GM13976 (cell line): ENCODE measurements at regions of chr20 and their contacts with region 1.

Region 1: DNA sequence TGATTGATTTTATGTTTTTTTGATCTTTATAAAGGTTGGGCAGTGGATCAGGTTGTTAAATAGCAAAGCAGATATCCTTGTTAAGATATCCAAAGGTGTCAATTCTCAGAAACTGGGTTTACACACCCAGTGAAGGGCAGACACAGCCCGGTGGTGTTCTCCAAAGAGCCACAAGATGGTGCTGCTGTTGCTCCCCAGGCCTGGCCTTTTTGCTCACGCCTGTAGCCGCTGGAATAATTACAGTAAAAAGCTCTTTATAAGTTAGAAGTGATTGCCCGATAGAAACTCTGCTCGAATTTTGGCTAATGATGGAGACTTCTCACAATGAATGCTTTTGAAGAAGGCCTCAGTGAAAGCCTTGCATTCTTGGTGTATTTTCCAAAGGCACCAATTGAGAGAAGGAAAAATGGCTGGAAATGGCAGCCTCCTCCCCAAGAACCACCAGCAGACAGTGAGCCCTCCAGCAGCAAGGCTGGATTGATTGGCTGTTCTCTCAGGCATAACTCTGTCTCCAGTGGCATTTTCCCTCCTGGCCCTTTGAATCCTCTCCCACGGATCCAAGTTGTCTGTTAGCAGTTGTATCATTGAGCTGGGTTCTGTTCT is 120.5 kb upstream of the CHD6 start:
- DNase-seq: peak; percentile 43
- CTCF ChIP-seq: peak; percentile 77

Region 2: DNA sequence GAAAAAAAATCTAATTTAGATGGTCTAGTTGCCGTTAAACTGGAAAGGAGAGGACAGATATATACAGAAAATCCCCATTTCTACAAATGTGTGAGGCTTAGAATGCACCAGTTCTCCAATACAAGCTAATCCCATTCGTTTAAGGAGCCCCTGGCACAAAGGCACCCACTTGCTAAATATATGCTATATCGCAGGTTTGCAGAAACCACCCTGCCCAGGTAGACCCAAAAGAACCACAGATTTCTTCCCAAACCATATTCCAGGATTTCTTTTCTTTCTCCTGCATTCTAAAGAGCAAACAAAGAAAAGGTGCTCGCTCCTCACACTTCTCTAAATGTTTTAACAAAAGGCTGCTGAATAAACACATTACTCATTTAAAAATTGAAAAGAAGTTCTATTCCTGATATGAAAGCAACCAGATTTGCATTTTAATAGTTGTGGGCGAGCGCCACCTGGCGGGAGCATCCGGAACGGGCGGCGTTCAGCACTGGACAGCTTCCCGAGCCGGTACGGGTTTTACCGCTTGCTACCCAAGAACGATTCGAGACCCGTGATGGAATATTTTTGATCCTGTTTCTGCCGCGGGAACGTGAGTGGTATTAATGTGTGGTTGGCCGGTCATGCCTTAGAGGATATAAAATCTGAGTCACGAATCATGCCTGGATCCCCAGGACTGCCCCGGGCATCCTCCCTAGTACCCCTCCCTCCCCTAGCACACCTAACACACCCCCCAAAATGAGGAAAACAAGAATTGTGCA is 1449.0 kb after region 1 on chr20:
- in situ Hi-C with region 1: loop called (anchors 25 kb)
- DNase-seq: peak; percentile 85
- CTCF ChIP-seq: peak; percentile 84

Region 3: DNA sequence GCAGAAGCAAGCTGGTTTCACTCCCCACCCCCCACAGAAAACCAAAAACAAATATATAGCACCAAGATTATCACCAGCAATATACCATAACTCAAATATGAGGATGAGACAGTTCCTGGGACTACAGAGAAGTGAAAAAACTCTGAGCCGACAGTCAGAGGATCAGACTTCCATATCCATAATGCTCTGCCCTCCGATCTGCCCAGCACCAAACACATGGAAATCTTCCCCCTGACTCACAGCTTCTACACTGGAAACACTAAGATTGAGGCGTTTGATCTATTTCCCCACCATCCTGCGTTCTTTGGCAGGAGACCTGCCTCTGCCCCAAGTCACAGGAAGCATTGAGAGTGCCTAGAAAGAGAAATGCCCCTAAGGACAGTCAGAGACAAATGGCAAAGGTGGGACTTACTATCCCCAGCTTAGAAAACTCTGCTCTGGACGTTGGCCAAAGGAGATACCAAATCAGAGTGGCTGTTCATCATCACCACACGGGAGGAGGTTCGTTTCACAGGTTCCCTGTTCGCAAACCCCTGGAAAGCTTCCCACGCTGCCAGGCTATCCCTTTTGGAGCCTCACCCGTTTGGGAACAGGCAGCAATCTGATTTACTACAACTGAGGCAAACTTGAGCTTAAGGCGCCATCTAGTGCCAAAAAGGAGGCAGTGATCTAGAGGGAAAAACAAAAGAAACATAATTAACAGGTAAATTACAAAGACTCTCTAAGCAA is 1670.3 kb after region 1 on chr20:
- in situ Hi-C with region 1: loop called (anchors 25 kb)
- DNase-seq: no peak
- CTCF ChIP-seq: peak; percentile 49